ENCODE measurements at regions of chr1 and their contacts with region 1.

Region 1: GRCh38 chr1:91165033-91165654 is 143.3 kb upstream of the ZNF644 start:
- DNase-seq: peak; percentile 39 to 79 (median 69)
- ATAC-seq: peak; percentile 76
- H3K4me3 ChIP-seq: no peak overlapping the region
- H3K4me3 Mint-ChIP-seq: no peak overlapping the region
- H3K27ac ChIP-seq: no peak overlapping the region
- H3K27ac Mint-ChIP-seq: no peak overlapping the region
- H3K4me1 ChIP-seq: no peaks in the 10 kb centered on the region
- H3K4me1 Mint-ChIP-seq: no peaks in the 10 kb centered on the region
- H3K27me3 ChIP-seq: no peaks in the 10 kb centered on the region
- H3K27me3 Mint-ChIP-seq: no peaks in the 10 kb centered on the region
- CTCF ChIP-seq: peak; percentile 82

Region 2: GRCh38 chr1:90114521-90115141 is 1050.5 kb before region 1 on chr1:
- CTCF ChIA-PET with region 1: no interaction called
- POLR2A ChIA-PET with region 1: no interaction called
- intact Hi-C with region 1: loop called in 1 of 2 experiments (anchors 10 kb)
- DNase-seq: peak in 2 of 9 experiments; percentile 6 to 24
- ATAC-seq: no peak
- H3K4me3 ChIP-seq: no peak overlapping the region
- H3K4me3 Mint-ChIP-seq: no peak overlapping the region
- H3K27ac ChIP-seq: no peak overlapping the region
- H3K27ac Mint-ChIP-seq: no peak overlapping the region
- H3K4me1 ChIP-seq: no peaks in the 10 kb centered on the region
- H3K4me1 Mint-ChIP-seq: no peaks in the 10 kb centered on the region
- H3K27me3 ChIP-seq: no peaks in the 10 kb centered on the region
- H3K27me3 Mint-ChIP-seq: peaks cover 32% of the 10 kb centered on the region
- CTCF ChIP-seq: peak; percentile 52

Region 3: DNA sequence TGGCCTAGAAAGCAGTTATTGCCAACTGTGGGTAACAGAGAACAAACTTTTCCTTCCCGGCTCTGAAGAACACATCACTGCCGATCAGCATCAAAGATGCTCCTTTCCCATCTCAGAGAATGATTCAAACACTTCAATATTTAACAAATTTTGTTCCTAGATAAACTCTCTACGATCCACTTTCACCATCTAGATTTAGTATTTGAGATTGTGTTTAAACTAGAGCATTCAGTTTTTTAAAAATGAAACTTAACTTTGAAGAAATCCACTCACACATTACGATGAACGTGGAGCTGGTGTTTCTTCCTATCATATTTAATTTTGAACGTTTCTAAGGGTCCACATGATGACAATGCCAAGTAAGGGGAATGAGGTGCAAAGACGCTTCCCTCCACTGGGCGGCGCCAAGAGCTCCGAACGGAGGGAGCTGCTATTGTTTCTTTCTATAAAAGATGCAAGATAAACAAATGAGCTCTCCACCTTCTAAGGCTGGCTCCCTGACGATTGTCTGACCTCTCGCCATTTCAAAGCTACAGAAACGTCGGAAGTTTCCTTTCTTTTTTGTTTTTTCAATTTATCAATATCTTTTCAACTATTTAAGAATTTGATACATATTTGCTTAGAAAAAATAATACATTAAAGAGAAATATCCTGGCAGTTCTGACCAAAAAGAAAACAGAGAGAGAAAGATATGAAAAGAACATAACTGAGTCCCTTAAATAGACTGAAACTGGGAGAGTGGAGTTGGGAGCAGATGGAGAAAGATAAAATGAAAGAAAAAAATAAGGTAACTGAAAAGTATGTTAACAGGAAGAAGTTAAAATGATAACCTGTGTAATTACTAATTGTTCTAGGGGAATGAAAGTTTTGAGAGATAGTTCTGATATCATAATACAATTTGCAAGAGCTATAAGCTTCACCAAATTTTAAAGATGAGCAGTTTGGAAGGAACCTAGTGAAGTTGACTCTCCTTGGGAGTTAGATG is 443.6 kb before region 1 on chr1:
- CTCF ChIA-PET with region 1: interaction called, 12 read pairs
- POLR2A ChIA-PET with region 1: no interaction called
- intact Hi-C with region 1: loop called in 1 of 2 experiments (anchors 1 kb)
- DNase-seq: peak in 6 of 9 experiments; percentile 20 to 69 (median 46)
- ATAC-seq: peak; percentile 50
- H3K4me3 ChIP-seq: no peak overlapping the region
- H3K4me3 Mint-ChIP-seq: no peak overlapping the region
- H3K27ac ChIP-seq: no peak overlapping the region
- H3K27ac Mint-ChIP-seq: no peak overlapping the region
- H3K4me1 ChIP-seq: peaks cover 37% of the 10 kb centered on the region
- H3K4me1 Mint-ChIP-seq: peaks cover 47% of the 10 kb centered on the region
- H3K27me3 ChIP-seq: peaks cover 74 to 83% of the 10 kb centered on the region in 2 experiments
- H3K27me3 Mint-ChIP-seq: peaks cover 81% of the 10 kb centered on the region
- CTCF ChIP-seq: peak; percentile 62

Region 4: GRCh38 chr1:91141858-91142257 is 23.3 kb before region 1 on chr1:
- CTCF ChIA-PET with region 1: interaction called, 13 read pairs
- POLR2A ChIA-PET with region 1: no interaction called
- intact Hi-C with region 1: no loop called
- DNase-seq: no peak
- ATAC-seq: no peak
- H3K4me3 ChIP-seq: no peak overlapping the region
- H3K4me3 Mint-ChIP-seq: no peak overlapping the region
- H3K27ac ChIP-seq: no peak overlapping the region
- H3K27ac Mint-ChIP-seq: no peak overlapping the region
- H3K4me1 ChIP-seq: no peaks in the 10 kb centered on the region
- H3K4me1 Mint-ChIP-seq: no peaks in the 10 kb centered on the region
- H3K27me3 ChIP-seq: no peaks in the 10 kb centered on the region
- H3K27me3 Mint-ChIP-seq: no peaks in the 10 kb centered on the region
- CTCF ChIP-seq: no peak

Region 5: DNA sequence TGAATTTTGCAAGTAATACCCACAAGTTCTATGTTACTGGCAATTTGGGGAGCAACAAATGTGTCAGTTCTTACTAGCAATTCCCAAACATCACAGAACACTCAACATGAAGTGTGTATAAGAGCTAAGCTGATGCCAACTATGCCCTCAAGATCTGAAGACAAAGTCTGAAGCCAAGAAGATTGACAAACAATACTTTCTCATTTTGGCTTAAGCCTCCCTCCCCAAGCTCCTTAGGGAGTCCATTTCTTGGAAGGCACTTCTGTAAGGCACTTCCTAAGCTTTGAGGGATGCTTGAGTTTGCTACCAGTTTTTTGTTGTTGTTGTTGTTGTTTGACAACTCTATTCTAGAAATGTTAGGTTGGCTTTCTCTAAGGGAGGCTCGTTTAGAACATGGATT is 11.1 kb after region 1 on chr1:
- CTCF ChIA-PET with region 1: interaction called, 26 read pairs
- POLR2A ChIA-PET with region 1: no interaction called
- intact Hi-C with region 1: no loop called
- DNase-seq: no peak
- ATAC-seq: no peak
- H3K4me3 ChIP-seq: no peak overlapping the region
- H3K4me3 Mint-ChIP-seq: no peak overlapping the region
- H3K27ac ChIP-seq: no peak overlapping the region
- H3K27ac Mint-ChIP-seq: no peak overlapping the region
- H3K4me1 ChIP-seq: no peaks in the 10 kb centered on the region
- H3K4me1 Mint-ChIP-seq: no peaks in the 10 kb centered on the region
- H3K27me3 ChIP-seq: no peaks in the 10 kb centered on the region
- H3K27me3 Mint-ChIP-seq: peaks cover 24% of the 10 kb centered on the region
- CTCF ChIP-seq: no peak

Region 6: DNA sequence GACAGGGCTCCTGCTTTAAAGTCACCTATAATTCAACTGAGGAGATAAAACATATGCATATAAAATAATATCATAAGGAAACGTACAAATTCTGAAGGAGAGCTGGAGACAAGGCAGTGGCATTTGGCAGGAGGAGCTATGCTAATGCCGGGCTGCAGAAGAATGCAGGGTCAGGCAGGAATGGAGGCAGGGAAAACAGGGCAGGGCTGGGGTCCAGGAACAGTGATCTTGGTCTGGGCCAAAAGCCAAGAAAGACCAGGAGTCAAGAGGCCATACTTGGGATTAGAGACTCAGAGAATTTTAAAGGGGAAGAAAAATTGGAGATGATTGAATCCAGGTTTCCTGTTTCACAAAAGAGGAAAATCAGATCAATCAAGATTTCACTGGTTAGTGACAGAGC is 764.1 kb after region 1 on chr1:
- CTCF ChIA-PET with region 1: interaction called, 17 read pairs
- POLR2A ChIA-PET with region 1: no interaction called
- intact Hi-C with region 1: loop called (anchors 1 to 2 kb)
- DNase-seq: no peak
- ATAC-seq: no peak
- H3K4me3 ChIP-seq: no peak overlapping the region
- H3K4me3 Mint-ChIP-seq: no peak overlapping the region
- H3K27ac ChIP-seq: no peak overlapping the region
- H3K27ac Mint-ChIP-seq: no peak overlapping the region
- H3K4me1 ChIP-seq: no peaks in the 10 kb centered on the region
- H3K4me1 Mint-ChIP-seq: no peaks in the 10 kb centered on the region
- H3K27me3 ChIP-seq: no peaks in the 10 kb centered on the region
- H3K27me3 Mint-ChIP-seq: no peaks in the 10 kb centered on the region
- CTCF ChIP-seq: no peak